Spleen (tissue), 13 donors: ENCODE measurements at regions of chr2 and their contacts with region 1.

Region 1: GRCh38 chr2:11778923-11779757 is 32.7 kb downstream of the LPIN1 start:
- DNase-seq: peak; percentile 96
- H3K4me3 ChIP-seq: peak overlapping the region in 4 of 8 donors; percentile 17 to 53 (median 20)
- H3K27ac ChIP-seq: peak overlapping the region in 3 of 8 donors; percentile 48 to 59 (median 58)
- H3K4me1 ChIP-seq: peaks cover 21 to 52% (median 30%) of the 10 kb centered on the region in 6 donors
- H3K27me3 ChIP-seq: no peaks in the 10 kb centered on the region
- CTCF ChIP-seq: peak; percentile 78 to 98 (median 94)
- POLR2A ChIP-seq: no peak

Region 2: GRCh38 chr2:11583840-11584524 is 195.2 kb before region 1 on chr2:
- intact Hi-C with region 1: no loop called
- DNase-seq: peak; percentile 80
- H3K4me3 ChIP-seq: no peak overlapping the region
- H3K27ac ChIP-seq: no peak overlapping the region
- H3K4me1 ChIP-seq: no peaks in the 10 kb centered on the region
- H3K27me3 ChIP-seq: peaks cover 0 to 36% (median 0%) of the 10 kb centered on the region in 7 donors
- CTCF ChIP-seq: peak; percentile 24 to 76 (median 63)
- POLR2A ChIP-seq: no peak

Region 3: GRCh38 chr2:11642974-11643373 is 136.2 kb before region 1 on chr2:
- intact Hi-C with region 1: no loop called
- DNase-seq: no peak
- H3K4me3 ChIP-seq: no peak overlapping the region
- H3K27ac ChIP-seq: no peak overlapping the region
- H3K4me1 ChIP-seq: no peaks in the 10 kb centered on the region
- H3K27me3 ChIP-seq: peaks cover 0 to 5% (median 0%) of the 10 kb centered on the region in 7 donors
- CTCF ChIP-seq: no peak
- POLR2A ChIP-seq: no peak

Region 4: DNA sequence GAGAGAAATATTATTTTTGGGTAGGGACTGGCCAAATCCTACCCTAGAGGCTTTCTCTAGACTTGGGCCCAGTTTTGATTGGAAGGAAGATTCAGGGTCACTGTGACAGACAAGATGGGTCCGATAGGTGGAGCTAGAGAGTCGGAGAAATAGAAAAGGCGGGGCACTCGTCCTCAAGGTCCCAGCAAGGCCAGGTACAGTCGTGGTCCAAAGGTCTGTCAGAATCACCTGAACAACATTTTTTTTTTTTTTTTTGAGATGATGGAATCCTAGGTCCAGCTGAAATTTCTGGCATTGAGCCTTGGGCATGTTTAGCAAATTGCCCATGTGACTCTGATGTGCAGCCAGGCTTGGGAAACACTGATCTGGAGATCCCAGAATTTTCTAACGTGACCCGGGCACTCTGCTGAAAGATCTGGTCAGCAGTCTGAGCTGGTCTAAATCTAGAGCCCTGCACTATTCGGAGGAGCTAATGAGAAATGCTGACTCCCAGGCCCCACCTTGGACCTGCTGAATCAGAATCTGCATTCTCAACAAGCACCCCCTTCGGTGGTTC is 86.1 kb before region 1 on chr2:
- intact Hi-C with region 1: loop called (anchors 2 kb)
- DNase-seq: peak; percentile 34
- H3K4me3 ChIP-seq: no peak overlapping the region
- H3K27ac ChIP-seq: no peak overlapping the region
- H3K4me1 ChIP-seq: peaks cover 0 to 38% (median 17%) of the 10 kb centered on the region in 6 donors
- H3K27me3 ChIP-seq: peaks cover 0 to 12% (median 0%) of the 10 kb centered on the region in 7 donors
- CTCF ChIP-seq: peak; percentile 45 to 84 (median 77)
- POLR2A ChIP-seq: no peak

Region 5: GRCh38 chr2:11743846-11744553 is 35.1 kb before region 1 on chr2:
- intact Hi-C with region 1: loop called (anchors 5 kb)
- DNase-seq: peak; percentile 92
- H3K4me3 ChIP-seq: peak overlapping the region in 3 of 8 donors; percentile 5 to 54 (median 9)
- H3K27ac ChIP-seq: peak overlapping the region in 7 of 8 donors; percentile 40 to 76 (median 57)
- H3K4me1 ChIP-seq: peaks cover 23 to 60% (median 57%) of the 10 kb centered on the region in 6 donors
- H3K27me3 ChIP-seq: no peaks in the 10 kb centered on the region
- CTCF ChIP-seq: no peak
- POLR2A ChIP-seq: no peak

Region 6: GRCh38 chr2:11914455-11914854 is 135.3 kb after region 1 on chr2:
- intact Hi-C with region 1: no loop called
- DNase-seq: no peak
- H3K4me3 ChIP-seq: no peak overlapping the region
- H3K27ac ChIP-seq: no peak overlapping the region
- H3K4me1 ChIP-seq: no peaks in the 10 kb centered on the region
- H3K27me3 ChIP-seq: no peaks in the 10 kb centered on the region
- CTCF ChIP-seq: no peak
- POLR2A ChIP-seq: no peak

Region 7: DNA sequence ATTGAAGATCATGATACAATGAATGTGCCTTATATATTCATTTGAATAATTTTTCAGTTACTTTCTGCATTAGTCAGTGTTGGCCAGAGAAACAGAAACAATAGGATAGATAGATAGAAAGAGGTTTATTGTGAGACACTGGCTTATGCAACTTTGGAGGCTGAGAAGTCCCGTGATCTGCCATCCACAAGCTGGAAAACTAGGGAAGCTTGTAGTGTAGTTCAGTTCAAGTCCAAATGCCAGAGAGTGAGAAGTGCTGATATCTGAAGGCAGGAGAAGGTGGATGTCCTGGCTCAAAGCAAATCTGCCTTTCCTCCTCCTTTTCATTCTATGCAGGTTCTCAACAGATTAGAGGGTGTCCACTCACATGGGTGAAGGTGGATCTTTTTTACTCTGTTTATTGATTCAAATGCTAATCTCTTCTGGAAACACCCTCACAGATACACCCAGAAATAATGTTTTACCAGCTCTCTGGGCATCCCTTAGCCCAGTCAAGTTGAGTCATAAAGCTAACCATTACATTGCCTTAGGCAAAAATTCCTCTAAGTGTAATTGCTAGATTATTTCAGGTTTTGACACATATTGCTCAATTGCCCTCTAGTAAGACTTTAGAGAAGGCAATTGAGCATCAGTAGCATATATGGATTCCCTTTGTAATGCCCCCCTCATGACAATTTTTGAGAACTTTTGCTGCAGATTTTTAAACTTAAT is 308.7 kb after region 1 on chr2:
- intact Hi-C with region 1: no loop called
- DNase-seq: no peak
- H3K4me3 ChIP-seq: no peak overlapping the region
- H3K27ac ChIP-seq: no peak overlapping the region
- H3K4me1 ChIP-seq: peaks cover 0 to 23% (median 7%) of the 10 kb centered on the region in 6 donors
- H3K27me3 ChIP-seq: no peaks in the 10 kb centered on the region
- CTCF ChIP-seq: no peak
- POLR2A ChIP-seq: no peak